ENCODE measurements at regions of chr16 and their contacts with region 1.

Region 1: GRCh38 chr16:30628627-30629540 is 18.7 kb upstream of the ZNF689 start:
- DNase-seq: peak; percentile 84 to 89
- ATAC-seq: peak; percentile 91 to 98 (median 92)
- H3K4me3 ChIP-seq: no peak overlapping the region
- H3K4me3 Mint-ChIP-seq: peak overlapping the region; percentile 74
- H3K27ac ChIP-seq: no peak overlapping the region
- H3K27ac Mint-ChIP-seq: peak overlapping the region in 1 of 2 donors; percentile 76
- H3K4me1 ChIP-seq: peaks cover 9% of the 10 kb centered on the region
- H3K4me1 Mint-ChIP-seq: peaks cover 7% of the 10 kb centered on the region in 2 donors
- H3K27me3 ChIP-seq: no peaks in the 10 kb centered on the region
- H3K27me3 Mint-ChIP-seq: peaks cover 0 to 1% of the 10 kb centered on the region in 2 donors
- CTCF ChIP-seq: peak; percentile 95

Region 2: GRCh38 chr16:30091474-30092372 is 537.2 kb before region 1 on chr16 and contains the start of gene TBX6:
- intact Hi-C with region 1: loop called (anchors 1 kb)
- DNase-seq: peak; percentile 93 to 96
- ATAC-seq: peak; percentile 85 to 93 (median 86)
- H3K4me3 ChIP-seq: peak within 1 kb of the TSS; percentile 65
- H3K4me3 Mint-ChIP-seq: peak within 1 kb of the TSS; percentile 88
- H3K27ac ChIP-seq: peak within 1 kb of the TSS; percentile 69
- H3K27ac Mint-ChIP-seq: peak within 1 kb of the TSS; percentile 91 to 93
- H3K4me1 ChIP-seq: peaks cover 53% of the 10 kb centered on the region
- H3K4me1 Mint-ChIP-seq: peaks cover 28 to 44% of the 10 kb centered on the region in 2 donors
- H3K27me3 ChIP-seq: no peaks in the 10 kb centered on the region
- H3K27me3 Mint-ChIP-seq: no peaks in the 10 kb centered on the region
- CTCF ChIP-seq: peak; percentile 78
- total RNA-seq, gene TBX6: 0.91 to 1.1 (median 0.98) TPM

Region 3: GRCh38 chr16:30557957-30558788 is 70.7 kb before region 1 on chr16 and contains the start of gene ZNF764:
- intact Hi-C with region 1: no loop called
- DNase-seq: peak; percentile 91 to 97
- ATAC-seq: peak; percentile 93 to 98 (median 93)
- H3K4me3 ChIP-seq: peak within 1 kb of the TSS; percentile 77
- H3K4me3 Mint-ChIP-seq: peak within 1 kb of the TSS; percentile 89
- H3K27ac ChIP-seq: peak within 1 kb of the TSS; percentile 90
- H3K27ac Mint-ChIP-seq: peak within 1 kb of the TSS; percentile 89 to 94
- H3K4me1 ChIP-seq: peaks cover 57% of the 10 kb centered on the region
- H3K4me1 Mint-ChIP-seq: peaks cover 31 to 32% of the 10 kb centered on the region in 2 donors
- H3K27me3 ChIP-seq: no peaks in the 10 kb centered on the region
- H3K27me3 Mint-ChIP-seq: peaks cover 0 to 4% of the 10 kb centered on the region in 2 donors
- CTCF ChIP-seq: no peak
- total RNA-seq, gene ZNF764: 9.6 to 13.0 (median 11.7) TPM

Region 4: GRCh38 chr16:30650369-30651123 is 21.7 kb after region 1 on chr16 and contains the start of gene PRR14:
- intact Hi-C with region 1: loop called (anchors 1 kb)
- DNase-seq: peak; percentile 96 to 99
- ATAC-seq: peak; percentile 82 to 95 (median 85)
- H3K4me3 ChIP-seq: peak within 1 kb of the TSS; percentile 94
- H3K4me3 Mint-ChIP-seq: peak within 1 kb of the TSS; percentile 100
- H3K27ac ChIP-seq: peak within 1 kb of the TSS; percentile 96
- H3K27ac Mint-ChIP-seq: peak within 1 kb of the TSS; percentile 95 to 100
- H3K4me1 ChIP-seq: peaks cover 31% of the 10 kb centered on the region
- H3K4me1 Mint-ChIP-seq: peaks cover 31 to 37% of the 10 kb centered on the region in 2 donors
- H3K27me3 ChIP-seq: no peaks in the 10 kb centered on the region
- H3K27me3 Mint-ChIP-seq: no peaks in the 10 kb centered on the region
- CTCF ChIP-seq: no peak
- total RNA-seq, gene PRR14: 81.0 to 110 (median 101) TPM